Panc1 (cell line): ENCODE measurements at regions of chr5 and their contacts with region 1.

Region 1: GRCh38 chr5:141889282-141889871 is 11.2 kb upstream of the PCDH1 start:
- DNase-seq: no peak
- ATAC-seq: peak; percentile 78
- H3K4me3 ChIP-seq: no peak overlapping the region
- H3K27ac ChIP-seq: no peak overlapping the region
- H3K4me1 ChIP-seq: no peaks in the 10 kb centered on the region
- H3K27me3 ChIP-seq: peaks cover 17% of the 10 kb centered on the region
- CTCF ChIP-seq: peak; percentile 71; the same call in 1 of the 2 replicates

Region 2: GRCh38 chr5:141672848-141673813 is 216.2 kb before region 1 on chr5:
- CTCF ChIA-PET with region 1: interaction called, 10 read pairs
- POLR2A ChIA-PET with region 1: no interaction called
- in situ Hi-C with region 1: no loop called
- intact Hi-C with region 1: no loop called
- DNase-seq: no peak
- ATAC-seq: no peak
- H3K4me3 ChIP-seq: no peak overlapping the region
- H3K27ac ChIP-seq: no peak overlapping the region
- H3K4me1 ChIP-seq: no peaks in the 10 kb centered on the region
- H3K27me3 ChIP-seq: no peaks in the 10 kb centered on the region
- CTCF ChIP-seq: no peak